ENCODE measurements at regions of chr11 and their contacts with region 1.

Region 1: DNA sequence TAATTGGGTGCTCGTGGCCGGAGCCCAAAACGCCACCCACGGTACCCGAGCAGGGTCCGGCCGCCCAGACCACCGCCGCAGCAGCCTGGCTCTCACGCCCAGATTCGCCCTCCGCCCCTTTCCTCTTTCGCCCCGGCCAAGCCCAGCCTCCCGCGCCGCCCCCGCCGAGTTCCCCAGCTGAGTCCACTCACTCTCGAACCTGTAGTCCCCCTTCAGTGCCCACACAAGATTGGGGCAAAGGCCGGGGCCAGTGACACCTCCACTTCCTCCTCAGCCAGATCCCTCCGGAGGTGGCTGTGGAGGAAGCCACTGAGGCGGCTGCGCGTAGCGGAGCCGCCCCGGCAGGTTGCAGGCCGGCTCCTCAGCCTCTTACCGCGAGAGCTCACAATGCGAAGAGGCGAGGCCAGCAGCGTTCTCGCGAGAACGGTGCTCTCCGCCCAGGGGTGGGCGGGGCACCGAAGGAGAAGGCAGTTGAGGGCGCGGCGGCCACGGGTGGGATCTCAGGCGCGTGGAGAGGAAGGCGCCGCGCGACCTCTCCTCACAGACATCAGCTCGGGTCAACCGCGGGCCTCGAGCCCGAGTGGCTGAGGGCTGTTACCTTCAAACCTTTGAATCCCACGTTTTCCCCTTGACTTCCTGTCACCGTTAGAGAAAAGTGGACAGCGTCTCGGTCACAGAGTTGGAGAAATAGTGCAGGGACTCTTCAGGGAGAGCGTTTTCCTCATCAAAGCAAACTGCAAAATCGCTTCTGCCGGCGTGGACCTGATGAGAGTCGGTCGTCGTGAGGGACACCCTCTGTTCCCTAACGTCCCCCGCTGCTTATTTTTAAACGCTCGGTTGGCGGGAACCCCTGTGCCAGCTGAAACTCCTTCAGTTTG is at the start of gene BTBD10:
- DNase-seq: peak; percentile 93
- H3K4me3 ChIP-seq: peak within 1 kb of the TSS; percentile 70 to 83
- H3K27ac ChIP-seq: peak within 1 kb of the TSS; percentile 89 to 90
- H3K4me1 ChIP-seq: no peaks in the 10 kb centered on the region
- H3K27me3 ChIP-seq: no peaks in the 10 kb centered on the region
- CTCF ChIP-seq: no peak
- POLR2A ChIP-seq: peak; percentile 91
- total RNA-seq, gene BTBD10: 21.9 to 31.8 TPM

Region 2: GRCh38 chr11:13210424-13210823 is 252.7 kb before region 1 on chr11:
- intact Hi-C with region 1: loop called (anchors 10 kb)
- DNase-seq: peak; percentile 69
- H3K4me3 ChIP-seq: no peak overlapping the region
- H3K27ac ChIP-seq: no peak overlapping the region
- H3K4me1 ChIP-seq: no peaks in the 10 kb centered on the region
- H3K27me3 ChIP-seq: no peaks in the 10 kb centered on the region
- CTCF ChIP-seq: peak; percentile 47 to 85 (median 67)
- POLR2A ChIP-seq: no peak

Region 3: GRCh38 chr11:13384908-13385640 is 78.1 kb before region 1 on chr11:
- intact Hi-C with region 1: loop called (anchors 10 kb)
- DNase-seq: no peak
- H3K4me3 ChIP-seq: no peak overlapping the region
- H3K27ac ChIP-seq: no peak overlapping the region
- H3K4me1 ChIP-seq: no peaks in the 10 kb centered on the region
- H3K27me3 ChIP-seq: no peaks in the 10 kb centered on the region
- CTCF ChIP-seq: peak in 3 of 4 experiments; percentile 26 to 52 (median 44)
- POLR2A ChIP-seq: no peak

Region 4: GRCh38 chr11:13668102-13668956 is 205.2 kb after region 1 on chr11 and contains the start of gene FAR1:
- intact Hi-C with region 1: loop called (anchors 5 kb)
- DNase-seq: peak; percentile 98
- H3K4me3 ChIP-seq: peak within 1 kb of the TSS; percentile 94 to 96
- H3K27ac ChIP-seq: peak within 1 kb of the TSS; percentile 84 to 87
- H3K4me1 ChIP-seq: no peaks in the 10 kb centered on the region
- H3K27me3 ChIP-seq: no peaks in the 10 kb centered on the region
- CTCF ChIP-seq: peak; percentile 32 to 78 (median 64)
- POLR2A ChIP-seq: peak; percentile 87
- total RNA-seq, gene FAR1: 24.5 to 28.0 TPM

Measured in prostate gland (tissue), 2 donors.